Thyroid gland (tissue), 4 donors: ENCODE measurements at regions of chr18 and their contacts with region 1.

Region 1: GRCh38 chr18:55152801-55153200 is 193.5 kb upstream of the CCDC68 start:
- DNase-seq: no peak
- H3K4me3 ChIP-seq: no peak overlapping the region
- H3K27ac ChIP-seq: no peak overlapping the region
- H3K4me1 ChIP-seq: no peaks in the 10 kb centered on the region
- H3K27me3 ChIP-seq: no peaks in the 10 kb centered on the region
- CTCF ChIP-seq: no peak
- POLR2A ChIP-seq: no peak

Region 2: DNA sequence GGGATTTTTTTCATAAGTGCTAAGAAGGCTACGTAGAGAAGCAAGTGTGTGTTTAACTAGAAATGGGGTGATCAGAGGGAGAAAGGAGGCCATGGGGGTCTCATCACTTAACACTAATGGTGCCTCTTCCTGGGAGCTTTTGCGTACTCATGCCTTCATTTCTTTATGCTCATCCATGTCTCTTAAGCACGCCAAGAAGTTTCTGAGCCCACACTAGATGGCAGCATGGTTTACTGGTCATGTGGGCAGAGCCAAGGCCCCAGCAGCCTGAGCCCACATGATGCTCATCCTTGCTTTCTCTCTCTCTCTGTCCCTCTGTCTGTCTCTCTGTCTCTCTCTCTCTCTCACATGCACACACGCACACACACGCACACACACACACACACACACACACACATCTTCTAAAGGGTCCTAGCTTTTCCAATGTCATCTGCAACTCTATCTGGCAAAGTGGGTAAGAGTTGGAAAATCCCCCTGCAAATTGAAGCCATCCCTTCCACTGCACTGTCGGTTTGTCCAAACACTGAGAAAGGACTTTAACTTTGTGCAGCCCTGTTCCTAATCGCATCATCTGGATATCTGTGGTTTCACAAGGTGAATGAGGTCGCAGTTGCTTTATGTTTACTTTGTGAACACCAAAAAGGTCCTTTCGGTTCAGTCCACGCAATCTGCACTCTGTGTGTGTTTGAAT is 56.4 kb before region 1 on chr18:
- intact Hi-C with region 1: loop called (anchors 10 kb)
- DNase-seq: peak; percentile 10 to 16
- H3K4me3 ChIP-seq: no peak overlapping the region
- H3K27ac ChIP-seq: no peak overlapping the region
- H3K4me1 ChIP-seq: no peaks in the 10 kb centered on the region
- H3K27me3 ChIP-seq: no peaks in the 10 kb centered on the region
- CTCF ChIP-seq: peak in 1 of 6 experiments; percentile 31
- POLR2A ChIP-seq: no peak